Esophagus muscularis mucosa (tissue), 4 donors: ENCODE measurements at regions of chr18 and their contacts with region 1.

Region 1: GRCh38 chr18:79507076-79507545 is 111.4 kb downstream of the NFATC1 start:
- DNase-seq: no peak
- H3K4me3 ChIP-seq: peak overlapping the region; percentile 44 to 55 (median 50)
- H3K27ac ChIP-seq: peak overlapping the region; percentile 84 to 91 (median 86)
- H3K4me1 ChIP-seq: peaks cover 30 to 39% (median 32%) of the 10 kb centered on the region in 4 donors
- H3K27me3 ChIP-seq: no peaks in the 10 kb centered on the region
- CTCF ChIP-seq: no peak
- EP300 ChIP-seq: no peak
- POLR2A ChIP-seq: peak; percentile 14

Region 2: GRCh38 chr18:79156327-79156726 is 350.8 kb before region 1 on chr18:
- intact Hi-C with region 1: no loop called
- DNase-seq: no peak
- H3K4me3 ChIP-seq: no peak overlapping the region
- H3K27ac ChIP-seq: no peak overlapping the region
- H3K4me1 ChIP-seq: no peaks in the 10 kb centered on the region
- H3K27me3 ChIP-seq: no peaks in the 10 kb centered on the region
- CTCF ChIP-seq: no peak
- EP300 ChIP-seq: no peak
- POLR2A ChIP-seq: no peak

Region 3: DNA sequence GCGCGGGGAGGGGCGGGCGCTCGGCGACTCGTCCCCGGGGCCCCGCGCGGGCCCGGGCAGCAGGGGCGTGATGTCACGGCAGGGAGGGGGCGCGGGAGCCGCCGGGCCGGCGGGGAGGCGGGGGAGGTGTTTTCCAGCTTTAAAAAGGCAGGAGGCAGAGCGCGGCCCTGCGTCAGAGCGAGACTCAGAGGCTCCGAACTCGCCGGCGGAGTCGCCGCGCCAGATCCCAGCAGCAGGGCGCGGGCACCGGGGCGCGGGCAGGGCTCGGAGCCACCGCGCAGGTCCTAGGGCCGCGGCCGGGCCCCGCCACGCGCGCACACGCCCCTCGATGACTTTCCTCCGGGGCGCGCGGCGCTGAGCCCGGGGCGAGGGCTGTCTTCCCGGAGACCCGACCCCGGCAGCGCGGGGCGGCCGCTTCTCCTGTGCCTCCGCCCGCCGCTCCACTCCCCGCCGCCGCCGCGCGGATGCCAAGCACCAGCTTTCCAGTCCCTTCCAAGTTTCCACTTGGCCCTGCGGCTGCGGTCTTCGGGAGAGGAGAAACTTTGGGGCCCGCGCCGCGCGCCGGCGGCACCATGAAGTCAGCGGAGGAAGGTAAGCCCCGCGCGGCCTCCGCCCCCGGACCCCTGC is 111.2 kb before region 1 on chr18 and contains the start of gene NFATC1:
- intact Hi-C with region 1: loop called (anchors 5 kb)
- DNase-seq: no peak
- H3K4me3 ChIP-seq: peak within 1 kb of the TSS; percentile 76 to 91 (median 86)
- H3K27ac ChIP-seq: peak within 1 kb of the TSS; percentile 97 to 99 (median 98)
- H3K4me1 ChIP-seq: peaks cover 38 to 74% (median 63%) of the 10 kb centered on the region in 4 donors
- H3K27me3 ChIP-seq: peaks cover 0 to 5% (median 0%) of the 10 kb centered on the region in 4 donors
- CTCF ChIP-seq: peak in 1 of 3 experiments; percentile 10
- EP300 ChIP-seq: no peak
- POLR2A ChIP-seq: no peak
- total RNA-seq, gene NFATC1: 15.0 to 22.0 (median 17.8) TPM

Region 4: DNA sequence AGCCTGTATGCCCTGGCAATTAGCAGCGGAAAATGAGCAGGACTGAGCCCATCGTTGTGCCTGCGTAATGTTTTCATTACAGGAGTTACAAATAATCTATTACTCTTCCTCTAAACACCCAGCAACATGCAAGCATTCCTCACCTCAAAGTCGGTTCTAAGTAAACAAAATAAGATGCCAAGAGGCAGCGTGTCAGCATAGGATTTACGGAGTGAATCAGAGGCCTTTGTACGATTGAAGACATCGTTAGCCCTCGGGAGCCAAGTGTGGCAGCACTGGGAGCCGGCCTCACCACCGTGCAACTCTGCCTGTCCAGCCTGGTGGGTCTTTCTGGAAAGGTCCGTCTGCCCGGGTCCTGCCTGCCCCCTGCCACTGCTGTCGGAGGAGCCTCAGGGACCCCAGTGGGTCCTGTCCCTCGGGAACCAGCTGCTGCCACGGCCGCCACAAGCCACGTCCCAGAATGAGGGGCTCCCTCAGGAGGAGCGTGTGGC is 92.4 kb after region 1 on chr18:
- intact Hi-C with region 1: no loop called
- DNase-seq: no peak
- H3K4me3 ChIP-seq: no peak overlapping the region
- H3K27ac ChIP-seq: no peak overlapping the region
- H3K4me1 ChIP-seq: peaks cover 0 to 4% (median 0%) of the 10 kb centered on the region in 4 donors
- H3K27me3 ChIP-seq: peaks cover 0 to 52% (median 2%) of the 10 kb centered on the region in 4 donors
- CTCF ChIP-seq: no peak
- EP300 ChIP-seq: no peak
- POLR2A ChIP-seq: no peak

Region 5: DNA sequence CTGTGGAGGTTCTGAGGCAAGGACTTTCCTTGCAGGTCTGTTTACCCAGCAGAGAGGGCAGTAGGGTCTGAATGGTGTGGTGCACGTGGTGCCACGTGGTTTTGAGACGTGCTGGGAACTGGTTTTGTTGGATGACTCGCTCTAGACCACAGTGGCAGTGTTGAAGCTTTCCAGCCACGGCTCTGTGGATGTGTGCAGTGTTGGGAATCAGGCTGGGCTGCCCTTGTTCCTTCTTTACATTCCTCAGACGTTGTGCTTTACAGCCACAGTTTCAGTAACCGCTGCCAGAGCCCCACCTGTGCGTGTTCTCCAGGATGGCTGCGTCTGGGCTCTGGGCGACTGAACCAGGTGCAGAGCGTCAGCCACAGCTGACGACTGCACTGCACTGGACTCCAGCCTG is 180.7 kb after region 1 on chr18:
- intact Hi-C with region 1: no loop called
- DNase-seq: no peak
- H3K4me3 ChIP-seq: no peak overlapping the region
- H3K27ac ChIP-seq: no peak overlapping the region
- H3K4me1 ChIP-seq: peaks cover 0 to 8% (median 4%) of the 10 kb centered on the region in 4 donors
- H3K27me3 ChIP-seq: no peaks in the 10 kb centered on the region
- CTCF ChIP-seq: no peak
- EP300 ChIP-seq: no peak
- POLR2A ChIP-seq: no peak